Endothelial cell of umbilical vein (primary cell): ENCODE measurements at regions of chr11 and their contacts with region 1.

Region 1: DNA sequence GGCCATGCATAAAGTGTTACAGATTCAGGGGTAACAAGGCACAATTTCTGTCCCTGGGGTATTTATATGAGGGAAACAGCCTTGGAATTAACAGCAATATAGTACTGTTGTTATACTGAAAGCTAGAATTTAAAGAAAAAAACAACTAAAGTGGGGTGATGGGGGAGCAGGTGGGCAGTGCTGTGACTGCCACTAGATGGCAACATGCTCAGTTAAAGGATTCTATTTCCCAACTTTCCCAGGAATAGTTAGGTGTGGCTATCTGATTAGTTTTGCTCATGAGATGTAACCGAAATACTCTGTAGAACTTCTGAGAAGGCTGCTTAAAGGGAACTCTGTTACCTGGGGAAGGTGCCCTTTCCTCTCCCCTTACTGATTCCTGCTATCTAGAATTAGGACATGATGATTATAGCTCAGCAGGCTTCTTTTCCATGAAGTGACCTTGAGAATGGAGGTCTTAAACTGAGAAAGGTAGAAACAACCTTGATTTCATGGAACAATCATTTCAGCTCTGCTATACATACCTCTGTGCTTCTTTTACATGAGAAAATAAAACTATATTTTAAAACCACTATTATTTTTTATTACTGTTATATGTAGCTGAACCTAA is 102.6 kb downstream of the RELT start:
- DNase-seq: peak; percentile 59
- H3K4me3 ChIP-seq: no peak overlapping the region
- H3K27ac ChIP-seq: no peak overlapping the region
- H3K4me1 ChIP-seq: no peaks in the 10 kb centered on the region
- H3K27me3 ChIP-seq: no peaks in the 10 kb centered on the region
- CTCF ChIP-seq: peak; percentile 79 to 87
- POLR2A ChIP-seq: no peak

Region 2: GRCh38 chr11:73126804-73127480 is 351.9 kb before region 1 on chr11:
- CTCF ChIA-PET with region 1: no interaction called
- POLR2A ChIA-PET with region 1: no interaction called
- dilution Hi-C with region 1: no loop called
- intact Hi-C with region 1: no loop called
- DNase-seq: no peak
- H3K4me3 ChIP-seq: no peak overlapping the region
- H3K27ac ChIP-seq: no peak overlapping the region
- H3K4me1 ChIP-seq: no peaks in the 10 kb centered on the region
- H3K27me3 ChIP-seq: no peaks in the 10 kb centered on the region
- CTCF ChIP-seq: no peak
- POLR2A ChIP-seq: no peak

Region 3: DNA sequence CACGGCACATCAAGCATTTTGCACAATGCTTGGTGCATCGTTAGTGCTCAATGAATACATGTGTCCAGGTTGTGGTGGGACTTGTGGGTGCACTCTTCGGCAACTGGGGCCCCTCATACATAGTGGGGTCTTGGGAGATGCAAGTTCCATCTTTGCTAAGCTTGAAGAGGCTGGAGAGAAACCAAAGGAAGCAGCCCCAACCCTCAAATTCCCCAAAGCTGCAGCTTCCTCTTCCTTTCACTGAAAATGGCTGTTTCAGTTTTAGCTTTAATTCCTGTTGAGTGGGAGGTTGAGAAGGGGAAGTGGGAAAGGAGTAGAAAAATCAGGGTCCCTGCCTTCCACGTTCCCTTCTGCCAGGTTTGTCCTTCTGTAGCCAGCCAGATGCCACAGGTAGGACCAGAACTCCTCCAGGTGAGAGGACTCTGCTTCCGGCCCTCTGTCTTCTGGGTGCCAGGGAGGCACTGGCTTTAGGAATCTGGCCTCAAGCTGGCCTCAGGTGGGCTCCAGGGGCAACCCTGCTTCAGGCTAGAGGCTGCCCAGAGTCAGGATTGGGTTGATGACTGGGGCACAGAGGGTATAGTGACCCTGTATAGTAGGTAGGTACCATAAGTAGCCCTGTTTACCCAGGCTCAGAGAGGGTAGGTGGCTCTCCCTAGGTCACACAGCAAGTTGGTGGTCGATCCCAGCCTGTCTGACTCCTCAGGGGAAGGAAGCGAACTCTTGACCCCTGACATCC is 190.5 kb before region 1 on chr11:
- CTCF ChIA-PET with region 1: no interaction called
- POLR2A ChIA-PET with region 1: no interaction called
- dilution Hi-C with region 1: no loop called
- intact Hi-C with region 1: no loop called
- DNase-seq: no peak
- H3K4me3 ChIP-seq: no peak overlapping the region
- H3K27ac ChIP-seq: peak overlapping the region; percentile 71
- H3K4me1 ChIP-seq: peaks cover 17% of the 10 kb centered on the region
- H3K27me3 ChIP-seq: no peaks in the 10 kb centered on the region
- CTCF ChIP-seq: no peak
- POLR2A ChIP-seq: no peak

Region 4: GRCh38 chr11:73335204-73335923 is 143.5 kb before region 1 on chr11:
- CTCF ChIA-PET with region 1: no interaction called
- POLR2A ChIA-PET with region 1: no interaction called
- dilution Hi-C with region 1: no loop called
- intact Hi-C with region 1: no loop called
- DNase-seq: peak; percentile 88
- H3K4me3 ChIP-seq: no peak overlapping the region
- H3K27ac ChIP-seq: peak overlapping the region; percentile 70
- H3K4me1 ChIP-seq: peaks cover 33% of the 10 kb centered on the region
- H3K27me3 ChIP-seq: no peaks in the 10 kb centered on the region
- CTCF ChIP-seq: peak; percentile 95 to 96
- POLR2A ChIP-seq: no peak

Region 5: DNA sequence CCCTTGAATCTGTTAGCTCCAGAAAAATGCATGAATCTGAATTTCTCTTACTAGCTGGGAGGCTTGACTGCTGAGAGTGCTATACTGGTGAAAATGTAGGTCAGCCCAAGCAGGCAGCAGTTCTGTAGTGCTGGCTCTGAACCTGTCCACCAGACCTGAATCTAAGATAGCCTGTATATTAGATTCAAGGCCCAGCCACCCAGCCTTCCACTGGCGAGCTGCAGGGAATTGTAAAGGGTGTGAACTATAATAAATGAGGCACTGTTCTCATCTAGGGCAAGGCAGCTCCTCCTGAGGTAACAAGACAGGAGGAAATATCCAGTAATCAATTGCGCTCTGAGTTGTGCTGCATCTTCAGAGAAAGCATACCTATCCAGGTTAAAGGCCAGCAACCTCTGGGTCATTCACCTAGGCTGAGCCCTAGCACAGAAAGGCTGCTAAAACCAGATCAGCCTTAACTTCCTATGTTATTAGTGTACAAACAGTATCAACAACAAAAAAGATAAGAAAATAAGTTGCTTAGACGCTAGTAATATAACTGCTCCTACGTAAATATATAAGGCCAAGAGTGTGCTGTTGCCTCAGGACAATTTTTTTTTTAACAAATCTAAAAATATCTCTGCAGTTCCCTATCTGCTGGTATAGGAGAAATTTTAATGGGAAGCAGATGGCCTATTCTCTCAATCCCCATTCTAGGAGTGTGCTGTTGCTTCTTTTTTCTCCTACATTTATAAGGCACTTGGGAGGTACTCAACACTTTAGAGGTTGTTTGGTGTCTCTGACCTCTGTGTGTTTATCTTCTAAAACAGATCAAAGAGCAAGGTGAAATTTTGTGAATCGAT is 39.6 kb before region 1 on chr11:
- CTCF ChIA-PET with region 1: interaction called, 13 read pairs
- POLR2A ChIA-PET with region 1: no interaction called
- dilution Hi-C with region 1: no loop called
- intact Hi-C with region 1: no loop called
- DNase-seq: no peak
- H3K4me3 ChIP-seq: no peak overlapping the region
- H3K27ac ChIP-seq: no peak overlapping the region
- H3K4me1 ChIP-seq: no peaks in the 10 kb centered on the region
- H3K27me3 ChIP-seq: no peaks in the 10 kb centered on the region
- CTCF ChIP-seq: no peak
- POLR2A ChIP-seq: no peak

Region 6: DNA sequence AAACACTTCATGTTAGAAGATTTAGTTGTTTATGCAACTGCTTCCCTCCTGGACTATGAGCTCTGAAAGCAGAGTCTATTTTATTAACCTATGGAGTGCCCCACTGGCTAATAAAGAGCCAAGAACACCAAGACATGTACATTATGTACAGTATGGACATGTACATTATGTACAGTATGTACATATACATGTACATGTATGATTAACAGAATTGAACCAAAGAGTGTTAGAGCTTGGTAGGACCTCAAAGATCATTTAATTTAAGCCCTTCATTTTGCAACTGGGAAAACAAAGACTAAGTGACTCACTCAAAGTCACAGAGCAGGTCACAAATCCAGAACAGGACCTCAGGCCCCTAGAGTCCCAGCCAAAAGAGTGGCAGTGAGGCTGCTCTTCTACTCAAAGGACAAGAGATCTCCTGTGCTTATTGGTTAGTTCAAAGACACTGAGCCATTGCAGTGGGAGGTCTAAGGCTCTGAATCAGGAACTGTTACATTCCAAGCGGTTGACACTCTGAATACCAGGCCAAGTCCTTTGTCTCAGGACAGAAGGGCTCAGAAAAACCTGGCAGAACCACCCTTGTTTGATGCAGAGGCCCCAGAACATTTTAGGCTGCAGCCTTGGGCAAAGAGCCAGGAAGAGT is 15.2 kb after region 1 on chr11:
- CTCF ChIA-PET with region 1: interaction called, 17 read pairs
- POLR2A ChIA-PET with region 1: no interaction called
- dilution Hi-C with region 1: no loop called
- intact Hi-C with region 1: no loop called
- DNase-seq: peak; percentile 27
- H3K4me3 ChIP-seq: no peak overlapping the region
- H3K27ac ChIP-seq: no peak overlapping the region
- H3K4me1 ChIP-seq: no peaks in the 10 kb centered on the region
- H3K27me3 ChIP-seq: no peaks in the 10 kb centered on the region
- CTCF ChIP-seq: no peak
- POLR2A ChIP-seq: no peak

Region 7: GRCh38 chr11:73521621-73522020 is 42.8 kb after region 1 on chr11:
- CTCF ChIA-PET with region 1: interaction called, 19 read pairs
- POLR2A ChIA-PET with region 1: no interaction called
- dilution Hi-C with region 1: no loop called
- intact Hi-C with region 1: no loop called
- DNase-seq: peak; percentile 51
- H3K4me3 ChIP-seq: no peak overlapping the region
- H3K27ac ChIP-seq: no peak overlapping the region
- H3K4me1 ChIP-seq: peaks cover 19% of the 10 kb centered on the region
- H3K27me3 ChIP-seq: no peaks in the 10 kb centered on the region
- CTCF ChIP-seq: no peak
- POLR2A ChIP-seq: no peak

Region 8: DNA sequence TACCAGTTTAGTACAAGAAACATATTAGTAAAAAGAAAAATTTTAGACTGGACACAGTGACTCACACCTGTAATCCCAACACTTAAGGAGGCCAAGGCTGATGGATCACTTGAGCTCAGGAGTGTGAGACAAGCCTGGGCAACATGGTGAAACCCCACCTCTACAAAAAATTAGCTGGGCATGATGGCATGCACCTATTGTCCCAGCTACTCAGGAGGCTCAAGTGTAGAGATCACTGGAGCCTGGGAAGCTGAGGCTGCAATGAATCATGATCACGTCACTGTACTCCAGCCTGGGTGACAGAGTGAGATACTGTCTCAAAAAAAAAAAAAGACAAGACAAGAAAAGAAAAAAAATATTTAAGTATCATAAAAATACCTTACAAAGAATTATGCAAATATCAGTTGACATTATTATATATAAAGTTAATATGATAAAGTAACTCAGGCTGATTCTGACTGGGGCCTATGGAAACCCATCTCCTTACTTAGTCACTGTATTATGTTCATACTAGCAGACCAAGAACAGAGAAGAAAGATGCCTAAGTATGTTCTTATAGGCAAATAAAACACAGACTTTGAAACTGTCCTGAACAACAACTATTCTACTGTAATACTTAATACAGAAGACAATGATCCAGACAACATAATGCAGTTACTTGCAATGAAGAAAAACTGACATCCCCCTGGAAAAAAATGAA is 91.7 kb after region 1 on chr11:
- CTCF ChIA-PET with region 1: interaction called, 18 read pairs
- POLR2A ChIA-PET with region 1: no interaction called
- dilution Hi-C with region 1: no loop called
- intact Hi-C with region 1: no loop called
- DNase-seq: peak; percentile 17
- H3K4me3 ChIP-seq: no peak overlapping the region
- H3K27ac ChIP-seq: no peak overlapping the region
- H3K4me1 ChIP-seq: peaks cover 20% of the 10 kb centered on the region
- H3K27me3 ChIP-seq: no peaks in the 10 kb centered on the region
- CTCF ChIP-seq: no peak
- POLR2A ChIP-seq: no peak

Region 9: DNA sequence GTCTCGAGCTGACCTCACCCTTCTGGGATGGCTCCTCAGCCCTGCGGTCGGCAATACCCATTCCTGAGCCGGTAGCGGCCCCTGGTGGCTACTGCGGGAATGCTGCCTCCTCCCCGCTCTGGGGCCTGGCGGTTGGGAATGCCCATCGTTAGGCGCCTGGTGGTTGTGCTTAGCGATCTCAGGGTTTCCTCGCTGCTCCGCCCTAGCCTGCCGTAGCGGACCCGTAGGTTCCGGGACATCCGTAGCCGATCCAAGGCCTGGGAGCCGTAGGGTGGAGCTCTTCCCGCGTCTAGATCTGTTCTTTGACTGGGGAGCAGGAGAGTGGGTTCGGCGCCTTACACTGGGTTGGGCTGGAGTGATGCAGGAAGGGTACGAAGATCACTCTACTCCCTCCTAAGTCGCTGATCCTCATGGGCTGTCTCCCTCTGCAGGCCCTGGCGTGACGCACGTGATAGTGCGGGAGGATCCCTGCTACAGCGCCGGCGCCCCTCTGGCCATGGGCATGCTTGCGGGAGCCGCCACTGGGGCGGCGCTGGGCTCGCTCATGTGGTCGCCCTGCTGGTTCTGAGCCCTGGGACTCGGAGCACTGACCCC is 182.3 kb after region 1 on chr11:
- CTCF ChIA-PET with region 1: interaction called, 86 read pairs
- POLR2A ChIA-PET with region 1: interaction called, 3 read pairs
- dilution Hi-C with region 1: no loop called
- intact Hi-C with region 1: loop called (anchors 1 kb)
- DNase-seq: peak; percentile 84
- H3K4me3 ChIP-seq: peak overlapping the region in 2 of 3 experiments; percentile 26 to 32
- H3K27ac ChIP-seq: no peak overlapping the region
- H3K4me1 ChIP-seq: peaks cover 6% of the 10 kb centered on the region
- H3K27me3 ChIP-seq: no peaks in the 10 kb centered on the region
- CTCF ChIP-seq: peak; percentile 96 to 98
- POLR2A ChIP-seq: no peak